Endothelial cell of umbilical vein (primary cell): ENCODE measurements at regions of chr13 and their contacts with region 1.

Region 1: DNA sequence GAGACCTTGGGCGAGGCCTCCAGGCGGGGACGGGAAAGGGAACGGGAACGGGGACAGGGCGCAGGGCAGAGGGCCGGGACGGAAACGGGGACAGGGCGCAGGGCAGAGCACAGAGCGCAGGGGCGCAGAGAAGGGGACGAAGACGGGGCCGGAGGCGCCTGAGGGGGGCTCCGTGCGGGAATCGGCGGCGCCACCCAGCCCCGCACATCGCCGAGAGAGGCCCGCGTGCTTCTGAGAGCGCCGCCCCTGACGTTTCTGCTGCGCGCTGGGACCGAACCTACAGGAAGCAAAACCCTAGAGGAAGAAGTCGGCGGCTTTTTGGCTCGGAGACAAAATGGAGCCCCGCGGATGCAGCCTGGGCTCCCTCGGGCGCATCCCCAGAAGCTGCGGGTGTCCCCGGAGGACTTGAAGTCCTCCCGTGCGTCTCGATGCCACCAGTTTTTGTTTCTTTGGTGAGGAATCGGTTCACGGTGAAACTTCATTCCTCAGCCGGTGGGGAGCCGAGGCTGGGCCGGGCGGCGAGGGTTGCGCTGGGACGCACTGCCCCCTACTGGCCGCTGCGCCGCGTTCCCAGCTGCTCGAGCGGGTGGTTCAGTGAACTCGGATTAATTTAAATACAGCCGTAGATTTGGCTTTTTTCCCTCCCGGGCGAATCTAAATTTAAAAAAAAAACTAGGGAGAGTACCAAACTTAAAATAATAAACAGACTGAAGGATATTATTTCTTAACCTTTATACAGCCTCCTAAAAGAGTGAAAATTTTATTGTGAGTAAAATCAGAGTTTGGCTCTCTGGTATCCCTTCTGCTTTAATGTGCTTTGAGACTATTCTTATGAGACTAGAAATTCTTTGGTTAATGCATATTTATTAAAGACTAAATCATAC is 350.0 kb upstream of the ARGLU1 start:
- DNase-seq: peak; percentile 91
- H3K4me3 ChIP-seq: peak overlapping the region; percentile 44 to 74 (median 51)
- H3K27ac ChIP-seq: peak overlapping the region; percentile 90
- H3K4me1 ChIP-seq: peaks cover 27% of the 10 kb centered on the region
- H3K27me3 ChIP-seq: peaks cover 7 to 13% of the 10 kb centered on the region in 2 experiments
- CTCF ChIP-seq: peak; percentile 92 to 97
- POLR2A ChIP-seq: peak; percentile 55

Region 2: GRCh38 chr13:105196052-105196451 is 1721.9 kb before region 1 on chr13:
- CTCF ChIA-PET with region 1: no interaction called
- POLR2A ChIA-PET with region 1: no interaction called
- dilution Hi-C with region 1: no loop called
- intact Hi-C with region 1: loop called (anchors 10 kb)
- DNase-seq: peak; percentile 88
- H3K4me3 ChIP-seq: no peak overlapping the region
- H3K27ac ChIP-seq: peak overlapping the region; percentile 69
- H3K4me1 ChIP-seq: peaks cover 9% of the 10 kb centered on the region
- H3K27me3 ChIP-seq: no peaks in the 10 kb centered on the region
- CTCF ChIP-seq: no peak
- POLR2A ChIP-seq: no peak

Region 3: DNA sequence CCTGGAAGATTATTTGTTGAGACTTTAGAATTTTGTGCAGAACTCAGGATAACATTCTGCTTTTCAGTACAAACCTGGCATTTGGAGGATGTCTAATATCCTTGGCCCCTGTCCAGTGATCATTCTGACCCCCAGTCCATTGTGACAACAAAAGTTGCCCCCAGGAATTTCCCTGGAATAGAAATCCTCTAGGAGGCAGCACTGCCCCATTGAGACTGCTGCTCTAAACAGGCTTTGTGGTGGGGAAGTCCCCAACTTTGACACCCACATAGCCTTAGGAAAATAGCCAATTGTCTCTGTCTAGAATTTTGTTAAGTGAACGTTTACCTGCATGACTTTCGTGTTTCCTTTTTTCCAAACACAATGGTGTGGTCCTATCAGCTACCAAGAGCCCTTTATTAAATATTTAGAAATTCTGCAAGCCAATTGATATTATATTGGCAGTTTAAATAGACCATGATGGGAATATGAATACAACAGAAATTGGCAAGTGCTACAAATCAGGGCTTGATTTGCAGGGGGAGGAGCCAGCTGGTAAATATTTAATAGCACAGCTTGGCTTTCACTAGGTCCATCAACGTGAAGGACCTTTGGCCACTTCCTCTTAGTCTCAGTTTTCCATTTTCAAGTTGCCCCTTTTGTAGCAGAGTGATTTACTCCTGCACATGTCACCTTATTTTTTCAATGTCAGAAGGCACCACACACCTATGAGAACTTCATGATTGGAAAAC is 834.1 kb before region 1 on chr13:
- CTCF ChIA-PET with region 1: no interaction called
- POLR2A ChIA-PET with region 1: no interaction called
- dilution Hi-C with region 1: no loop called
- intact Hi-C with region 1: loop called (anchors 1 kb)
- DNase-seq: peak; percentile 86
- H3K4me3 ChIP-seq: no peak overlapping the region
- H3K27ac ChIP-seq: no peak overlapping the region
- H3K4me1 ChIP-seq: no peaks in the 10 kb centered on the region
- H3K27me3 ChIP-seq: no peaks in the 10 kb centered on the region
- CTCF ChIP-seq: peak; percentile 71 to 77
- POLR2A ChIP-seq: no peak

Region 4: GRCh38 chr13:106349080-106349931 is 568.6 kb before region 1 on chr13:
- CTCF ChIA-PET with region 1: no interaction called
- POLR2A ChIA-PET with region 1: no interaction called
- dilution Hi-C with region 1: no loop called
- intact Hi-C with region 1: loop called (anchors 1 kb)
- DNase-seq: peak; percentile 99
- H3K4me3 ChIP-seq: peak overlapping the region in 2 of 3 experiments; percentile 17 to 52
- H3K27ac ChIP-seq: peak overlapping the region; percentile 98
- H3K4me1 ChIP-seq: peaks cover 30% of the 10 kb centered on the region
- H3K27me3 ChIP-seq: no peaks in the 10 kb centered on the region
- CTCF ChIP-seq: no peak
- POLR2A ChIP-seq: peak; percentile 71

Region 5: DNA sequence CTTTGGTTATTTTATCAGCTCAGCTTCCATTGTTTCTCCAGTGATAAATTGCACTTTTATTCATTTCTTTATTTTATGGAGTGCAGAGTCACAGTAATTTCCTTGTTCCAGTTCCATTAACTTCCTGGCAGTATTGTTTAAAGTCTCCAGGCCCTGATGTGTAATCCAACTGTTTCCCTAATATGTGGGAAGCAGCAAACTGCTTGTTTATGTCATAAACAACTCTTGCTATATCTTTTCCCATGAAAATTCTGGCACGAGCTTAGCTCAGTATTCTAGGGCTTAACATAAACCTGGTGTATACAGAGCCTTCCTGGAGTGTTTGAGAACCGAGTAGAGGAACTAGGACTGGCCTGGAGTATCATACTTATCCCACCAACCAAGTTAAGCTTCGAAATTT is 266.5 kb before region 1 on chr13:
- CTCF ChIA-PET with region 1: no interaction called
- POLR2A ChIA-PET with region 1: no interaction called
- dilution Hi-C with region 1: no loop called
- intact Hi-C with region 1: loop called (anchors 1 kb)
- DNase-seq: peak; percentile 80
- H3K4me3 ChIP-seq: no peak overlapping the region
- H3K27ac ChIP-seq: peak overlapping the region; percentile 63
- H3K4me1 ChIP-seq: peaks cover 13% of the 10 kb centered on the region
- H3K27me3 ChIP-seq: no peaks in the 10 kb centered on the region
- CTCF ChIP-seq: no peak
- POLR2A ChIP-seq: no peak

Region 6: DNA sequence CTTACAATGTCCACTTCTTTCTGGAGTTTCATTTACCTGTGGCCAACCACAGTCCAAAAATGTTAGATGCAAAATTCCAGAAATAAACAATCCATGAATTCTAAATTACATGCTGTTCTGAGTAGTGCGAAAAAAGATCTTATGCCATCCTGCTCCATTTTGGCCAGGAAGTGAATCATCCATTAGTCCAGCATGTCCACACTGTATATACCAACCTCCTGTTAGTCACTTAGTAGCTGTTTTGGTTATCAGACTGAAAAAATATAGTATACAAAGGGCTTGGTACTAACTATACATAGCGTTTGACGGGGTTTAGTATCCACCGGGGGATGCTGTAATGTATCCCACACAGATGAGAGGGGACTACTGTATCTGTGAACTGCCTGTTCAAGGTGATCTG is 268.0 kb after region 1 on chr13:
- CTCF ChIA-PET with region 1: no interaction called
- POLR2A ChIA-PET with region 1: no interaction called
- dilution Hi-C with region 1: no loop called
- intact Hi-C with region 1: loop called (anchors 5 kb)
- DNase-seq: peak; percentile 68
- H3K4me3 ChIP-seq: no peak overlapping the region
- H3K27ac ChIP-seq: peak overlapping the region; percentile 78
- H3K4me1 ChIP-seq: peaks cover 15% of the 10 kb centered on the region
- H3K27me3 ChIP-seq: no peaks in the 10 kb centered on the region
- CTCF ChIP-seq: no peak
- POLR2A ChIP-seq: no peak

Region 7: GRCh38 chr13:107450931-107451330 is 533.0 kb after region 1 on chr13:
- CTCF ChIA-PET with region 1: no interaction called
- POLR2A ChIA-PET with region 1: no interaction called
- dilution Hi-C with region 1: no loop called
- intact Hi-C with region 1: loop called (anchors 2 kb)
- DNase-seq: peak; percentile 99
- H3K4me3 ChIP-seq: no peak overlapping the region
- H3K27ac ChIP-seq: peak overlapping the region; percentile 99
- H3K4me1 ChIP-seq: peaks cover 23% of the 10 kb centered on the region
- H3K27me3 ChIP-seq: no peaks in the 10 kb centered on the region
- CTCF ChIP-seq: peak in 1 of 2 donors; percentile 12
- POLR2A ChIP-seq: peak; percentile 74